IMR-90 (cell line): ENCODE measurements at regions of chr12 and their contacts with region 1.

Region 1: DNA sequence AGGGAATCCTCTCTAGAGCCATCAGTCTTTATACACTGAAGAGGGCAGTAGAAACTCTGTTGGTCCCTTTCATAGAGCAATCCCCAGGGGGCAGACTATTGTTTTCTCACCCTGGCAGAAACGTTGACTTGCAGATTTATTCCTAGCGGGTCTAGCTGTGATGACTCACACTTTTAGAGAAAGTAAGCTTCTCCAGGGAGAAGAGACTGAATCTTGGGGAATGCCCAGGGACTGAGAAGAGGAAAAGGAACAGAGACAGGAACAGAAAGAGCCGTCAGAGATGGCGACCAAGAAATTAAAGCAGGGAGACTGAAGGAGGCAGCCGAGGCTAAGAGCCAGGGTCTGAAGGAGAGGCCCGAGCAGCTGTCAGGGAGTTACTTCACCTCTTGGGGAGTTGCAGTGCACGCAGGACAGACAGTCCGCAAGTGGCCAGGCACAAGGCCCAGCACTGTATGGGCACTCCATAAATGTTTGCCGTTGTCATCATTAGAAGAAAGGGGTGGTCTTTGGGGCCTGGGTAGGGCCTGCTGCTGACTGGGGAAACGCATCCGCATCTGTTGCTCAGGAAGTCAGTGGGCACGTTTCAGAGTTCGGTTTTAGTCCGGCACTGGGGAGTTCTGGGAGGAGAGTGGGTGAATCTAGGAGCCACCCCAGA is 13.0 kb downstream of the PLEKHG6 start:
- DNase-seq: peak; percentile 94
- ATAC-seq: peak; percentile 64
- H3K4me3 ChIP-seq: no peak overlapping the region
- H3K27ac ChIP-seq: peak overlapping the region; percentile 48
- H3K4me1 ChIP-seq: peaks cover 25% of the 10 kb centered on the region
- H3K27me3 ChIP-seq: no peaks in the 10 kb centered on the region
- CTCF ChIP-seq: peak; percentile 84
- POLR2A ChIP-seq: no peak; the same call in 1 of the 2 replicates
- RAD21 ChIP-seq: peak; percentile 58

Region 2: DNA sequence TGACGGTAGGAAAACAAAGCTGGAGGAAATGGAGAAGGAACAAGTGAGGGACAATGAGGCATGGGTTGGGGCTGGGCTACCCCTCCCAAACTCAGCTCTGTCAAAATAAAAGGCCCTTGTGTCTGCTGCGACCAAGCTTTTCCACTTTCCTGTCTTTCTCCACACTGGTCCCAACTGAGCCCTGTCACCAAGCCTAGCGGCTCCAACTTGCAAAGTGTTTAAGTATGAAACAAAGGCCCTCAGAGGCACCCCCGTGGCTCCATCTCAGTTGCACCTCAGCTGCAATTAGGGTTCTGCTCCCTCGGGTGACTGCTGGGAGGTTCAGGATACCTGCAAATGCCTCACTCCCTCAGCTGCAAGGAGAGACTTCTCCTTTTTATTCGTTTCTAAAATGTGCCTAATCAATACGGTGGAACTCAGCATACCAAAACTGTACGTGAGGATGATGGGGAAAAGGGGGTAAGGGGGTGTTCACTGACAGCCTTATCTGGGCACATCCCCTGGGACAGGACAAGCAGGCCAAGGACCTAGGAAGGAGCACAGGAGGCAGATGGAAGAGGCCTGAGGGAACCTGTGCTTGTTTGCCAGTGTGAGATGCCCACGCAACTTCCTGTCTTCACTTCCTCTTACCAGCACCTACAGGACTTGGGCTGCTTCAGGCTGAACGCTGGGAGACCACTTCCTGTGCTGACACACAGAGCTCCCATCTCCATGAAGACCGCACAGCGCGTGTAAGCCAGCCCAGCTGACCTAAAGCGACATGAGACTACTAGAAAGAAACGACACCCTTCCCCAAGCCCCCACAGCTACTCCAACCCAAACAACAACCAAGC is 138.2 kb after region 1 on chr12:
- CTCF ChIA-PET with region 1: interaction called, 5 read pairs
- POLR2A ChIA-PET with region 1: no interaction called
- dilution Hi-C with region 1: no loop called
- in situ Hi-C with region 1: loop called (anchors 5 kb)
- intact Hi-C with region 1: loop called (anchors 1 kb)
- DNase-seq: peak; percentile 45
- ATAC-seq: no peak
- H3K4me3 ChIP-seq: no peak overlapping the region
- H3K27ac ChIP-seq: no peak overlapping the region
- H3K4me1 ChIP-seq: no peaks in the 10 kb centered on the region
- H3K27me3 ChIP-seq: no peaks in the 10 kb centered on the region
- CTCF ChIP-seq: no peak
- POLR2A ChIP-seq: no peak
- RAD21 ChIP-seq: no peak